Activated T-helper 1 cell treated with anti-CD3 and anti-CD28 coated beads, Interleukin-12 subunit alpha, Interleukin-12 subunit beta, Interleukin-2, Interleukin-4 antibody, amounts not matched to agents 30 ng/mL and 10 ng/mL and 1 ng/mL, durations not matched to agents 14 hours and 24 hours and 36 hours (primary cell): ENCODE measurements at regions of chr11 and their contacts with region 1.

Region 1: DNA sequence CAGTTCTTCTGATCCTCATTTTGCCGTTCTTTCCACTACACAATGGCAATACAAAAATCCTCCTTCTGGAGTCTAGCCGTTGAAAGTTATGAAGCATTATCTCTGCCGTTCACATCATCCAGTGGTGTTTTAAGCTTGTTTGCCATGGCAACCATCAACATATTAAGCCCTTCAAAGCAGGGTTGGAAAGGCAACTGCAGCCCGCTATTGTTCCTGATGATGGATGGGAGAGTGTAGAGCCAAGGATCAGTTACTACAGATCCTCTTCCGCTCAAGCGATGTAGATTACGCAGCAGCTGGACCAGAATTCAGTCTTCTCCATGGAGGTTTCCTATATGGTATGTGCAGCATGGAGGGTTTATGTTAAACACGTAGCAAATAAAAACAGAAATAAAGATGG is 352.7 kb downstream of the NTM start:
- DNase-seq: no peak
- H3K4me3 Mint-ChIP-seq: no peak overlapping the region
- H3K27ac Mint-ChIP-seq: no peak overlapping the region
- H3K4me1 Mint-ChIP-seq: no peaks in the 10 kb centered on the region
- H3K27me3 Mint-ChIP-seq: no peaks in the 10 kb centered on the region

Region 2: GRCh38 chr11:131696690-131697089 is 26.4 kb before region 1 on chr11:
- intact Hi-C with region 1: loop called (anchors 1 kb)
- DNase-seq: no peak
- H3K4me3 Mint-ChIP-seq: no peak overlapping the region
- H3K27ac Mint-ChIP-seq: no peak overlapping the region
- H3K4me1 Mint-ChIP-seq: no peaks in the 10 kb centered on the region
- H3K27me3 Mint-ChIP-seq: peaks cover 10% of the 10 kb centered on the region